Natural killer cell (primary cell): ENCODE measurements at regions of chr2 and their contacts with region 1.

Region 1: DNA sequence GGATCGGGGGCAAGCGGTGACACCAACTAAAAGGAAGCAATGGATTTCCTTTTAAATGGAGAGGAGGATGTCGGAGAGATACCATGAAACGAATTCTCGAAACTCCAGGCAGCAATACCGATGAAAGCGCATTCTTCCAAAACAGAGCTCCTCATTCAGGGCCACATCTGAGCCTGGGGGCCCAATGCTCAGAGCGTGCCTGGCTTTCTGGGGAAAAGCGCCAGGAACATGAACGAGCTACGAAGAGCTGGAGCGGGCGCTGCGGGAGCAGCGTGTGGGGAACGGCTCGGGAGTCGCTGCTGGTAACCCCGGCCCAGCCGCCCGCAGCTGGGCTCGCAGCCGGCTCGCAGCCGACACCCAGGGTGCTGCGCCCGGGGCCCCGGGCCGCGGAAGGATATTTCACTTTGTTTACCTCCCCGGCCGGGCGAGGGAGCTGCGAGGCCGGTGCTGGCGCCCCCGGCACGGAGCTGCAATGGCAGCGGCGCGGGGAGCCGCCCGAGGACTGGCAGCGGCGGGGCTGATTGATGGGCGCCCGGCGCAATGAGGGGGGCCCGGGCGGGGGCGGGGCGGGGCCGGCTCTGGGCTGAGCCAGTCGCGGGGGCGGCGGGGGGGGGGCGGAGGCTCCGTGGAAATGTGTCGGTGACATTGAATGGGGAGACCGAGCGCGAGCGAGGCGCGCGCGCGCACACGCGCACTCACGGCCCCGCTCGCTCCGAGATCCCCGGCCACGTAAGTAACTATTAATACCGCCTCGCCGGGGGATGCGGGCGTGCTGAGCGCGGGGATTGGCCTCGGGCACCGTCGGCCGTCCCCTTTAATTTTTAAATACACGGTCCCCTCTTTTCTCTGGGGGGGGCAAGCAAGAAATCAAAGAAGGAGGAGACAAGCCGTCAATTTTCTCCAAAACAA is at the start of gene TRIB2:
- DNase-seq: peak; percentile 80 to 95
- ATAC-seq: peak; percentile 77 to 91 (median 84)
- H3K4me3 ChIP-seq: peak within 1 kb of the TSS; percentile 89
- H3K4me3 Mint-ChIP-seq: peak within 1 kb of the TSS; percentile 99
- H3K27ac ChIP-seq: peak within 1 kb of the TSS; percentile 88
- H3K27ac Mint-ChIP-seq: peak within 1 kb of the TSS; percentile 96 to 98
- H3K4me1 ChIP-seq: peaks cover 17% of the 10 kb centered on the region
- H3K4me1 Mint-ChIP-seq: peaks cover 61 to 72% of the 10 kb centered on the region in 2 donors
- H3K27me3 ChIP-seq: no peaks in the 10 kb centered on the region
- H3K27me3 Mint-ChIP-seq: no peaks in the 10 kb centered on the region
- CTCF ChIP-seq: peak; percentile 42
- total RNA-seq, gene TRIB2: 68.1 to 87.4 (median 84.5) TPM

Region 2: DNA sequence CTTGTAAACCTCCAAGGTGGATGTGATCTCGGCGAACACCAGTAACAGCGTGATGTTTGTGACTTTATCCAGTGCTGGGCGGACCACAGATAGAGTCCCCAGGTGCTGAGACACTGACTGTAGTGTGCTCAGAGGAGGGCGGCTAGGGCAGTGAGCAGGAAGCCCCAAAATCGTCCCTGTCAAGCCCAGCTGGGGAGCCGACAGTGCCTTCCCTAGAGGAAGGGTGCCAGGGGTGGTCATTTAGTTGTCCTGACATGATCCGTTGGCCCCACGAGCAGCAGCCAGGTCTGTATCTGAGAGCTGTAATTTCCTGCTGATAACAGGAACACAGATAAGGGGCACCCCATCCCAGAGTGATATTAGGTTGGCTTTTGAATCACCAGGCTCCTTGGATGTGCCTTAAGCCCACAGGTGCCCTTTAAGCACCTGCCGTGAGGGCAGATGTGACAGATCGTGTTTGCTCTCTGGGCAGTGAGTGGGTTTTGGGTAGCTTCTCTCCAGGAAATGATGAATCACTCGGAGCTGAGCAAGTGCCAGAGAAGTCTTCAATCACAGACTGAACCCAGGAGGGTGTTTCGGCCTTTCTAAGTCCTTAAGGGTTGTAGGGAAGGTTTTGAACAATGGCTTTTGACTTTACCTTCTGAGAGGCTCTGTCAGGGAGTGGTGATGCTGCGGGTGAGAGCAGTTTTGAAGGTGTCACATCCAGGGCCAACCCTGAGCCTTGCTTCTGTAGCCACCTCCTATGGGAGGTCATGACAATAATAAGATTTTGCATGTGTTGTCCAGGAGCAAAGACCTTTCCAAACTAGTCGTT is 962.4 kb before region 1 on chr2:
- intact Hi-C with region 1: loop called (anchors 5 kb)
- DNase-seq: peak; percentile 53 to 77
- ATAC-seq: peak; percentile 53 to 66 (median 56)
- H3K4me3 ChIP-seq: peak overlapping the region; percentile 15
- H3K4me3 Mint-ChIP-seq: peak overlapping the region; percentile 88
- H3K27ac ChIP-seq: peak overlapping the region; percentile 90
- H3K27ac Mint-ChIP-seq: peak overlapping the region; percentile 95
- H3K4me1 ChIP-seq: peaks cover 73% of the 10 kb centered on the region
- H3K4me1 Mint-ChIP-seq: peaks cover 78 to 81% of the 10 kb centered on the region in 2 donors
- H3K27me3 ChIP-seq: no peaks in the 10 kb centered on the region
- H3K27me3 Mint-ChIP-seq: no peaks in the 10 kb centered on the region
- CTCF ChIP-seq: no peak

Region 3: GRCh38 chr2:11945139-11946126 is 771.1 kb before region 1 on chr2:
- intact Hi-C with region 1: loop called (anchors 10 kb)
- DNase-seq: peak in 1 of 2 donors; percentile 27
- ATAC-seq: peak; percentile 81 to 89 (median 83)
- H3K4me3 ChIP-seq: no peak overlapping the region
- H3K4me3 Mint-ChIP-seq: peak overlapping the region; percentile 86
- H3K27ac ChIP-seq: peak overlapping the region; percentile 49
- H3K27ac Mint-ChIP-seq: peak overlapping the region; percentile 87 to 90
- H3K4me1 ChIP-seq: peaks cover 5% of the 10 kb centered on the region
- H3K4me1 Mint-ChIP-seq: peaks cover 17 to 23% of the 10 kb centered on the region in 2 donors
- H3K27me3 ChIP-seq: no peaks in the 10 kb centered on the region
- H3K27me3 Mint-ChIP-seq: peaks cover 0 to 4% of the 10 kb centered on the region in 2 donors
- CTCF ChIP-seq: no peak

Region 4: DNA sequence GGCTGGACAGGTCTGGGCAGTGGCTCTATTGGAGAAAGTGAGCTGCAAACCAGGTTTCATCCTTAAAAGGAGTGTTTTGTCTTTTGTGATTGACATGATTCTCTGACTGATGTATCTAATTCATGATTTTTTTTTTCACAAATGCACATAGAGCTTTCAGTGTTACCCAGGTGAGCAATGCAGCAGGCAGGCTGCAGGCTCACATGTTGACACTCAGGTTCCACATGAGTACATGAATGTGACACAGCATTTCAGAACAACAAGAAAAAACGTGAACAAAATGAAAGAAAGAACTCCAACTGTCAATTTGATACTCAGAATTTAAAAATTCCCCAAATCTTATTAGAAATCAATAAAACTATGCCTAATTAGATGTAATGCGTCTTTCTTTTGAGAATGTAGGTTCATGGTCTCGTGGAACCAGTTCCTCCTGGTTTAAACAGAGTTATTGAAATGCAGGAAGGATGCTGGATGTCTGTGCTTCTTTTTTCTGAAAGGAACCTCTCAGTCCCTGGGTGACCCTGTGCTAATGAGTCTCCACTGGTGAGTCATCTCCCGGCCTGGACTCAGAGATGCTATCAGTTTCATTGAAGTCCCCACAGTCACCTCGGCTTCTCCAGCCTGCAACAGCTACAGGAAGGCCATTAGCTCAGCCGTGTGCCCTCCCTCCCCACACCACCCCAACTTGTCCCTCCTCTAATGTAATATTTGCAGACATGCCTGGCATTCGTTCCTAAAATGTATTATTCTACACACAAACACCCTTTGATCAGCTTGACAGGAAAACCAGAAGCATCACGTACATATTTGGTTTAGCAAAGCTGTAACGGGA is 539.7 kb before region 1 on chr2:
- intact Hi-C with region 1: loop called (anchors 5 kb)
- DNase-seq: peak in 1 of 2 donors; percentile 29
- ATAC-seq: peak; percentile 70 to 82 (median 78)
- H3K4me3 ChIP-seq: no peak overlapping the region
- H3K4me3 Mint-ChIP-seq: peak overlapping the region; percentile 53
- H3K27ac ChIP-seq: no peak overlapping the region
- H3K27ac Mint-ChIP-seq: peak overlapping the region; percentile 68 to 69
- H3K4me1 ChIP-seq: peaks cover 20% of the 10 kb centered on the region
- H3K4me1 Mint-ChIP-seq: peaks cover 27 to 34% of the 10 kb centered on the region in 2 donors
- H3K27me3 ChIP-seq: no peaks in the 10 kb centered on the region
- H3K27me3 Mint-ChIP-seq: peaks cover 8 to 21% of the 10 kb centered on the region in 2 donors
- CTCF ChIP-seq: no peak

Region 5: GRCh38 chr2:12456293-12457151 is 260.0 kb before region 1 on chr2:
- intact Hi-C with region 1: loop called (anchors 2 kb)
- DNase-seq: peak; percentile 68 to 70
- ATAC-seq: peak; percentile 89 to 94 (median 93)
- H3K4me3 ChIP-seq: peak overlapping the region; percentile 35
- H3K4me3 Mint-ChIP-seq: peak overlapping the region; percentile 91
- H3K27ac ChIP-seq: peak overlapping the region; percentile 85
- H3K27ac Mint-ChIP-seq: peak overlapping the region; percentile 93 to 96
- H3K4me1 ChIP-seq: peaks cover 13% of the 10 kb centered on the region
- H3K4me1 Mint-ChIP-seq: peaks cover 36 to 39% of the 10 kb centered on the region in 2 donors
- H3K27me3 ChIP-seq: no peaks in the 10 kb centered on the region
- H3K27me3 Mint-ChIP-seq: no peaks in the 10 kb centered on the region
- CTCF ChIP-seq: no peak

Region 6: GRCh38 chr2:12856934-12857601 is 140.5 kb after region 1 on chr2:
- intact Hi-C with region 1: loop called (anchors 5 kb)
- DNase-seq: peak in 1 of 2 donors; percentile 71
- ATAC-seq: peak; percentile 39 to 58 (median 55)
- H3K4me3 ChIP-seq: no peak overlapping the region
- H3K4me3 Mint-ChIP-seq: no peak overlapping the region
- H3K27ac ChIP-seq: peak overlapping the region; percentile 46
- H3K27ac Mint-ChIP-seq: no peak overlapping the region
- H3K4me1 ChIP-seq: peaks cover 48% of the 10 kb centered on the region
- H3K4me1 Mint-ChIP-seq: peaks cover 12 to 15% of the 10 kb centered on the region in 2 donors
- H3K27me3 ChIP-seq: no peaks in the 10 kb centered on the region
- H3K27me3 Mint-ChIP-seq: no peaks in the 10 kb centered on the region
- CTCF ChIP-seq: no peak